ENCODE measurements at regions of chr2 and their contacts with region 1.

Region 1: GRCh38 chr2:178796079-178796677 is 11.0 kb downstream of the TTN start:
- DNase-seq: no peak
- H3K4me3 ChIP-seq: no peak overlapping the region
- H3K27ac ChIP-seq: no peak overlapping the region
- H3K4me1 ChIP-seq: no peaks in the 10 kb centered on the region
- H3K27me3 ChIP-seq: no peaks in the 10 kb centered on the region
- CTCF ChIP-seq: peak in 2 of 3 experiments; percentile 29 to 50; a peak in 2 of 4 replicates
- EP300 ChIP-seq: no peak
- POLR2A ChIP-seq: no peak
- RAD21 ChIP-seq: peak in 1 of 2 experiments; percentile 67

Region 2: DNA sequence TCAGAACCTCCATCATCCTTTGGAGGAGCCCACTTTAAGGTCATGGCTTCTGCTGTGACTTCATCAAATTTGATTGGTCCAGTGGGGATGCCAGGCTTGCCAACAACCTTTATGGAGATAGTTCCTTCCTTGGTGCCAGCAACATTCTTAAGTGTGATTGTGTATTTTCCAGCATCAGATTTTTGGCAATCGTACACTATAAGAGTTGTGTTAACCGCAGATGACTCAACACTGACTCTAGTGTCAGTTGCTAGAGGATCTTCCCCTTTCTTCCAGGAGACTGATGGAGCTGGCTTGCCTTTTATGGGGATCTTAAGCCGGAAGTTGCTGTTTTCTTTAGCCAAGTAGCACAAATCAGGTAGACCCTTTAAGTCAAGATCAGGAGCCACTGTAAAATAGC is 217.2 kb before region 1 on chr2:
- CTCF ChIA-PET with region 1: no interaction called
- POLR2A ChIA-PET with region 1: no interaction called
- DNase-seq: no peak
- H3K4me3 ChIP-seq: no peak overlapping the region
- H3K27ac ChIP-seq: no peak overlapping the region
- H3K4me1 ChIP-seq: no peaks in the 10 kb centered on the region
- H3K27me3 ChIP-seq: no peaks in the 10 kb centered on the region
- CTCF ChIP-seq: no peak
- EP300 ChIP-seq: no peak
- POLR2A ChIP-seq: no peak
- RAD21 ChIP-seq: no peak

Region 3: DNA sequence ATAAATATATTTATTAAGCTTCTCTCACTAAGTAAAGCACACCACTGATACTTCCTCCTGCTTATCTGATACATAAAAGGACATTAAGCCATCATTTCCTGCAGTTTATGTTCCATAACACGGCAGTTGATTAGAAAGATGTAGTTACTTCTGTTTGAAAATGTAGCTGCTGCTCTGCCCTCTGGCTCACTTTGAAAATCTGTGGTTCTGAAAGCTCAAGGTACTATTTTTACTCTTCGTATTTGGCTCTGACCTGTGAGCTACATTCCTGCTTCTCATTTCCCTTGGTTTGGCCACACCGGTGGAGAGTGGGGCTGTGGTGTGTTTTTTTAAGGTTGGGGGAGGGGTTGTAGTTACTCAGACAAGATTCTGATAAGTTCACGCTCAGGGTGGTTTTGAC is 23.8 kb after region 1 on chr2:
- CTCF ChIA-PET with region 1: interaction called, 12 read pairs
- POLR2A ChIA-PET with region 1: no interaction called
- DNase-seq: no peak
- H3K4me3 ChIP-seq: no peak overlapping the region
- H3K27ac ChIP-seq: no peak overlapping the region
- H3K4me1 ChIP-seq: no peaks in the 10 kb centered on the region
- H3K27me3 ChIP-seq: no peaks in the 10 kb centered on the region
- CTCF ChIP-seq: no peak
- EP300 ChIP-seq: no peak
- POLR2A ChIP-seq: no peak
- RAD21 ChIP-seq: no peak

Measured in H1 (cell line).